ENCODE measurements at regions of chr10 and their contacts with region 1.

Region 1: GRCh38 chr10:34815185-34816084 is at the start of gene PARD3:
- DNase-seq: peak; percentile 42
- H3K4me3 Mint-ChIP-seq: peak within 1 kb of the TSS; percentile 83
- H3K27ac Mint-ChIP-seq: peak within 1 kb of the TSS; percentile 75
- H3K4me1 Mint-ChIP-seq: peaks cover 34% of the 10 kb centered on the region
- H3K27me3 Mint-ChIP-seq: no peaks in the 10 kb centered on the region
- CTCF ChIP-seq: no peak
- total RNA-seq, gene PARD3: 49.6 and 70.0 TPM in 2 replicates

Region 2: GRCh38 chr10:34960983-34961382 is 145.5 kb after region 1 on chr10:
- CTCF ChIA-PET with region 1: no interaction called
- POLR2A ChIA-PET with region 1: no interaction called
- intact Hi-C with region 1: loop called (anchors 5 kb)
- DNase-seq: no peak
- H3K4me3 Mint-ChIP-seq: no peak overlapping the region
- H3K27ac Mint-ChIP-seq: no peak overlapping the region
- H3K4me1 Mint-ChIP-seq: no peaks in the 10 kb centered on the region
- H3K27me3 Mint-ChIP-seq: no peaks in the 10 kb centered on the region
- CTCF ChIP-seq: peak; percentile 33

Measured in MCF 10A (cell line).